ENCODE measurements at regions of chr22 and their contacts with region 1.

Region 1: GRCh38 chr22:17884084-17884483 is 109.8 kb upstream of the BID start:
- DNase-seq: no peak
- ATAC-seq: peak in 3 of 4 donors; percentile 29 to 52 (median 49)
- H3K4me3 ChIP-seq: no peak overlapping the region
- H3K27ac ChIP-seq: peak overlapping the region in 7 of 12 donors; percentile 11 to 70 (median 37)
- H3K4me1 ChIP-seq: peaks cover 0 to 31% (median 8%) of the 10 kb centered on the region in 12 donors
- H3K27me3 ChIP-seq: no peaks in the 10 kb centered on the region
- CTCF ChIP-seq: no peak
- POLR2A ChIP-seq: no peak

Region 2: GRCh38 chr22:17836992-17837742 is 46.9 kb before region 1 on chr22:
- intact Hi-C with region 1: loop called in 2 of 10 experiments (anchors 5 kb)
- DNase-seq: no peak
- ATAC-seq: peak in 1 of 4 donors; percentile 30
- H3K4me3 ChIP-seq: no peak overlapping the region
- H3K27ac ChIP-seq: peak overlapping the region in 9 of 12 donors; percentile 21 to 83 (median 64)
- H3K4me1 ChIP-seq: peaks cover 0 to 54% (median 21%) of the 10 kb centered on the region in 12 donors
- H3K27me3 ChIP-seq: no peaks in the 10 kb centered on the region
- CTCF ChIP-seq: no peak
- POLR2A ChIP-seq: no peak

Region 3: DNA sequence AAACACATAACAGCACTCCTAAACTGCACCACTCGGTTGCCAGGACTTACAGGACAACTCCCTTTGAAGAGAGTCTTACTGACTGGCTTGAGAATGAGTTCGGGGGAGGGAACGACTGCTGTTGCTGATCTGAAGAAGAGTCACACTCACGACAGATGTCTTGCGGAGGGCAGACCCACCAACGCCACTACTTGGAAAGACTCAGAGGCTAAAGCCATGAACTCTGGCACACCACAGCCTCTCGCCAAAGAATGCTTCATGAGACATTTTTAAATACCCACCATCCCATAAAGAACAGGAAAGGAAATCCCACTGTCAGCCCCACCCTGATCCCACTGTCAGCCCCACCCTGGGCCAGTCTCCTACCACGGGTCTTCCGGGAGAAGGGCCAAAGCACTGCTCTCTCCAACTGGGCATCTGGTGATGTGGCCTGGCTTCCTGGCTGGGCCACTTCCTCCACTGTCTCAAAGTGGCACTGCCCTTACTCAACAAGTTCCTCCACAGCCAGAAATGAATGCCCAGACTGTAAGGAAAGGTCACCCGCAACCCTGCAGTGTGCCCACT is 66.6 kb after region 1 on chr22:
- intact Hi-C with region 1: no loop called
- DNase-seq: peak in 4 of 5 donors; percentile 61 to 85 (median 68)
- ATAC-seq: peak; percentile 72 to 78 (median 74)
- H3K4me3 ChIP-seq: no peak overlapping the region
- H3K27ac ChIP-seq: peak overlapping the region; percentile 59 to 95 (median 79)
- H3K4me1 ChIP-seq: peaks cover 2 to 90% (median 46%) of the 10 kb centered on the region in 12 donors
- H3K27me3 ChIP-seq: no peaks in the 10 kb centered on the region
- CTCF ChIP-seq: no peak
- POLR2A ChIP-seq: no peak

Measured in heart left ventricle (tissue), 16 donors.